IMR-90 (cell line): ENCODE measurements at regions of chr9 and their contacts with region 1.

Region 1: DNA sequence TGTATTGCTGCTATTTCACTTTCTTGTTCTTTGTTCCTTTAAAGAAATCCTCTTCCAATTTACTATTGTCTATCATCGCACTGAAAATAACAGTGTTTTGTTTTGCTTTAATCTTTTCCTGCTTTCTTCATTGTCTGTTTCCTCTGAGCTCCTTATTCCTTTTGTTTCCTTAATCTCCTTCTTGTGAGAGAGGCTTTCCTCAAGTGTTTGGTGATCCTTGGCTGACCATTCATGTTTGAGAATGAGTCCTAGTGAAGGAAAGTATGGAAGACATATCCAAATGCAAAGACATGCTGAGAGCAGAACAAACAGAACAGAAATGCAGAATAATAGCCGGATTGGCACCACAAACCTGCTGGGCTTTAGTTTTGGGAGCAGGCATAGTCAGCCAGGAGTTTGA is 42.0 kb upstream of the ENTREP1 start:
- DNase-seq: no peak
- ATAC-seq: no peak
- H3K4me3 ChIP-seq: no peak overlapping the region
- H3K27ac ChIP-seq: no peak overlapping the region
- H3K4me1 ChIP-seq: no peaks in the 10 kb centered on the region
- H3K27me3 ChIP-seq: peaks cover 3% of the 10 kb centered on the region; the same call in 1 of the 2 replicates
- CTCF ChIP-seq: no peak
- POLR2A ChIP-seq: no peak
- RAD21 ChIP-seq: no peak

Region 2: DNA sequence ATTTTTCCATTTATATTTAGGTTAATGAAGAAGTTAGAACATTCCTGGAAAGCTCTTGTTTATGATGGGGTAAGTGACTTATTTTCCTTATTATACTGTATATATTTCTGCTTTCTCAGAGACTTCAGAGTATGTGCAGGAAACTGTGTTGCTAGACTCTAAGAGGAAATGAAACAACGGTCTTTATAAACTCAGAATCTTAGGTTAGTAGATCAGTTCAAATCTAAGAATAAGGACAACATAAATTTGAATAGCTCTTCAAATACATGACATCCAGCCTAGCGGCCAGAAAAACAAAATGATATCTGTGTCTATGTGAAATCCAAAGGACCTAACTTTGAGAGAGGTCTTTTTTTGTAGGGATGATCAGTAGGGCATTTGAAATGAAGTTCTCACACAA is 363.3 kb before region 1 on chr9:
- CTCF ChIA-PET with region 1: no interaction called
- POLR2A ChIA-PET with region 1: no interaction called
- dilution Hi-C with region 1: no loop called
- in situ Hi-C with region 1: no loop called
- intact Hi-C with region 1: loop called (anchors 10 kb)
- DNase-seq: no peak
- ATAC-seq: no peak
- H3K4me3 ChIP-seq: no peak overlapping the region
- H3K27ac ChIP-seq: no peak overlapping the region
- H3K4me1 ChIP-seq: no peaks in the 10 kb centered on the region
- H3K27me3 ChIP-seq: no peaks in the 10 kb centered on the region
- CTCF ChIP-seq: no peak
- POLR2A ChIP-seq: no peak
- RAD21 ChIP-seq: no peak